Uterus (tissue), 4 donors: ENCODE measurements at regions of chr17 and their contacts with region 1.

Region 1: DNA sequence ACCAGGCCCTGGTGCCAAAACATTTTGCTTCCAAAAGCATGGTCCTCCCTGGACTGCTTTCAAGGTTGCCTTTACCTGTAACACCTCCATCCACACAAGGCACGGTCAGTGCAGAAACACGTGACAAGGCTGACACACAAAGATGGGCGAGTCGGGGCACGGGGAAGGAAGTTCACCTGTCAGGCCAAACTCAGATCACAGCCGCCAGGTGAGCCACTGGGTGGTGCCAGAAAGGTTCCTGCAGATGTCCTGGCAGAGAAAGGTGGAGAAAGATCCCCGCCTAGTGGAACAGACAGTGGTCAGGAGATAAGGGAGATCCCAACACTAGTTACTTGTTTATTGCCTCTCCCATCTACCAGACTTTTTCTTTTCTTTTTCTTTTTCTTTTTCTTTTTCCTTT is 155.3 kb downstream of the AIPL1 start:
- DNase-seq: no peak
- H3K4me3 ChIP-seq: no peak overlapping the region
- H3K27ac ChIP-seq: no peak overlapping the region
- H3K4me1 ChIP-seq: no peaks in the 10 kb centered on the region
- H3K27me3 ChIP-seq: no peaks in the 10 kb centered on the region
- CTCF ChIP-seq: no peak
- POLR2A ChIP-seq: no peak

Region 2: DNA sequence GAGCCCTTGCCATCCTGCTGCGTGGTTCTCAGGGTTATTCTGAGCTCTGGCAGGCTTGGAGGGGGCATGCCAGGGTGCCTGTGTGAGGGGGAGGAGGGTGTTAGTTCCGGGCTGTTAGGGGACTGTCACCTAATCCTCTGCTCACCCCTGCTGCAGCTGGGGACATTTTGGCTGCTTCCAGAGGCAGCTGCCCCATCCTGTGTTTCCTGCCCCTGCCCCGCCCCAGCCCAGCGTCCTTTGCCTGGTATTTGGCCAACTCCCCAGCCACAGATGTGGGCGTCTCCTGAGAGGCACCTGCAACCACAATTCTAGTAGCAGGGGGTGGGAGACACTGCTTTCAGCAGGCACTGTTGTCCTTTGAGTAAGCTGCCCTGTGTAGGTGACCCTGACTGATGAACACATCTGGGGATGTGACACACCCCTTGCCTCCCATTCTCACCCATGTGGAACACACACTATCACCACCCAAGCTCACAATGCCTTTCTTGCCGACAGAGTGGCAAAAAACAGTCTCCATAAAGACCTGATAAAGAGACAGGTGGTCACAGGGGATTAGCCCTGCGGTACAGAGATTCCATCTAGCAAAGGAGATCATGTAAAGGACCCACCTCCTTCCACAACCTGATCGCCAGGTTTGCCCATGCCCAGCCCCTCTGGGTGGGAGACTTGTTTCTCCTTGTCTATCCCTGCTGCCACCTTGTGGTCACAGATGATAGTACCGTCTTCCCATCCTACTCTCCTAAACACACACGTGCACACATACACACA is 1376.4 kb before region 1 on chr17 and contains the start of gene CHRNE:
- intact Hi-C with region 1: no loop called
- DNase-seq: peak; percentile 61 to 84
- H3K4me3 ChIP-seq: no peak within 1 kb of the TSS
- H3K27ac ChIP-seq: peak within 1 kb of the TSS in 1 of 2 donors; percentile 1
- H3K4me1 ChIP-seq: no peaks in the 10 kb centered on the region
- H3K27me3 ChIP-seq: peaks cover 0 to 4% of the 10 kb centered on the region in 2 donors
- CTCF ChIP-seq: peak; percentile 57 to 73 (median 70)
- POLR2A ChIP-seq: no peak
- total RNA-seq, gene CHRNE: 0.79 to 0.83 TPM in 2 of 4 donors, not detected in the others

Region 3: GRCh38 chr17:5912991-5913531 is 366.6 kb before region 1 on chr17:
- intact Hi-C with region 1: no loop called
- DNase-seq: no peak
- H3K4me3 ChIP-seq: no peak overlapping the region
- H3K27ac ChIP-seq: no peak overlapping the region
- H3K4me1 ChIP-seq: no peaks in the 10 kb centered on the region
- H3K27me3 ChIP-seq: no peaks in the 10 kb centered on the region
- CTCF ChIP-seq: no peak
- POLR2A ChIP-seq: no peak

Region 4: GRCh38 chr17:6261480-6261879 is 18.2 kb before region 1 on chr17:
- intact Hi-C with region 1: loop called (anchors 1 kb)
- DNase-seq: no peak
- H3K4me3 ChIP-seq: no peak overlapping the region
- H3K27ac ChIP-seq: no peak overlapping the region
- H3K4me1 ChIP-seq: no peaks in the 10 kb centered on the region
- H3K27me3 ChIP-seq: no peaks in the 10 kb centered on the region
- CTCF ChIP-seq: no peak
- POLR2A ChIP-seq: no peak